ENCODE measurements at regions of chr6 and their contacts with region 1.

Region 1: DNA sequence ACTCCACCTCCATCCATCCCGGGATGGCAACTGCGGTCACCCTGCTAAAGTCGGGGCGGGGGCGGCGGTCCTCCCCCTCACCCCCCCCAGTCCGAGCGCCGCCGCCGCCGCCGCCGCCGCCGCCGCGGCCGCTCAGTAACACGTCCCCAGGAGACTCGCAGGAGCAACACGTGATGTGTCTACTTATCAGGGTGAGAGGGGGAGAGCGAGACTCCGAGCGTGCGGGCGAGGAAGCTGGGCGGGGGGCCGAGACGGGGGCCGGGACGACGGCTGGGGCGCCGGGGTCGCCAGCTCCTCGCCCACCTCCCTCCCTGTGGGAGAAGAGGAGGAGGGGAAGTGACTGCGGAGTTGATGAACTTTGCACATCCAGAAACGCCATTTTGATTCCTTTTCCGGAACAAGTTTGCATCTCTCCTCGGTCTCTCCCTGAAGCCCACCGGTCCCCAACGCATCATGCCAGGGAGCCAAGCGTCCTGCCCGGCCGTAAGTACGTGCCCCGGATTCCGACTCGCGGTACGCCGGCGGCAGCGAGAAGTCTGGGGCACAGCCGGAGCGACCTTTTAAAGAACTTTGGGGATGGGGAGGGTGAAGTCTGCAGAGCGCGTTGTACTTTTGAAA is at the start of gene RREB1:
- DNase-seq: peak in 1 of 2 experiments; percentile 40
- H3K4me3 ChIP-seq: peak within 1 kb of the TSS; percentile 90
- H3K27ac ChIP-seq: peak within 1 kb of the TSS; percentile 69
- H3K4me1 ChIP-seq: peaks cover 29% of the 10 kb centered on the region
- H3K27me3 ChIP-seq: no peaks in the 10 kb centered on the region
- CTCF ChIP-seq: no peak
- total RNA-seq, gene RREB1: 29.2 and 38.4 TPM in 2 replicates

Region 2: GRCh38 chr6:6724539-6725467 is 382.9 kb before region 1 on chr6:
- CTCF ChIA-PET with region 1: no interaction called
- POLR2A ChIA-PET with region 1: no interaction called
- intact Hi-C with region 1: loop called (anchors 5 kb)
- DNase-seq: peak in 1 of 2 experiments; percentile 70
- H3K4me3 ChIP-seq: no peak overlapping the region
- H3K27ac ChIP-seq: no peak overlapping the region
- H3K4me1 ChIP-seq: peaks cover 14% of the 10 kb centered on the region
- H3K27me3 ChIP-seq: no peaks in the 10 kb centered on the region
- CTCF ChIP-seq: peak; percentile 64

Region 3: GRCh38 chr6:6969761-6970223 is 137.9 kb before region 1 on chr6:
- CTCF ChIA-PET with region 1: no interaction called
- POLR2A ChIA-PET with region 1: no interaction called
- intact Hi-C with region 1: loop called (anchors 2 kb)
- DNase-seq: peak; percentile 91 to 97
- H3K4me3 ChIP-seq: no peak overlapping the region
- H3K27ac ChIP-seq: peak overlapping the region; percentile 73
- H3K4me1 ChIP-seq: peaks cover 44% of the 10 kb centered on the region
- H3K27me3 ChIP-seq: no peaks in the 10 kb centered on the region
- CTCF ChIP-seq: no peak

Region 4: DNA sequence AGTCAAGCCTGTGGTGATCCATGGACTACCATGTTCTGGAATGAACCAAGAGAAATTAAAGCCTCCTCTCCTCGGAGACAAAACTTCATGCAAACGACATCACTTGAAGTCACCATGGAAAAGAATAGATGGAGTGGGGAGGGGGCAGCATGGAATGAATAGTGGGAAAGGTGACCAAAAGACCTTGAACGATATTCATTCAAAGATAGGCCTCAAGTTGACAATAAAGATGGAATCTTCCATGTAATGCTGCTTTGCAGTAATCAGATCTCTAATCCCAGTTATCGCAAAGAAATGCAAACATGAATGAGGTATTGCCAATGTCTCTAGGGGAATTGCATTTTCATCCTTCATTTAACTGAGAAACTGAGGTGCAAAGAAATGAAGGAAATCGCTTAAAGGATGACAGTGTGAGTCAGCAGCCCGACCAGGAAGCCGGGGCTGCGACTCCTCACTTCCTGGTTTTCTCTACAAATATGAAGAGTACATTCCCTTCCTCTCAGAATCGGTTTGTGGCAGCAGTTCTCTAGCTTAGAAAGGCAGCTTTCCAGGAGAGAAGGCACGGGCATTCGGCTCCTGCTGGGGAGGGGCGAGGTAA is 65.5 kb before region 1 on chr6:
- CTCF ChIA-PET with region 1: no interaction called
- POLR2A ChIA-PET with region 1: no interaction called
- intact Hi-C with region 1: no loop called
- DNase-seq: peak; percentile 33 to 42
- H3K4me3 ChIP-seq: no peak overlapping the region
- H3K27ac ChIP-seq: peak overlapping the region; percentile 21; the same call in 1 of the 2 replicates
- H3K4me1 ChIP-seq: peaks cover 18% of the 10 kb centered on the region
- H3K27me3 ChIP-seq: no peaks in the 10 kb centered on the region
- CTCF ChIP-seq: no peak

Region 5: GRCh38 chr6:7060756-7061516 is 46.8 kb before region 1 on chr6:
- CTCF ChIA-PET with region 1: no interaction called
- POLR2A ChIA-PET with region 1: no interaction called
- intact Hi-C with region 1: no loop called
- DNase-seq: peak in 1 of 2 experiments; percentile 87
- H3K4me3 ChIP-seq: peak overlapping the region; percentile 20; the same call in 1 of the 2 replicates
- H3K27ac ChIP-seq: peak overlapping the region; percentile 91
- H3K4me1 ChIP-seq: peaks cover 48% of the 10 kb centered on the region
- H3K27me3 ChIP-seq: no peaks in the 10 kb centered on the region
- CTCF ChIP-seq: no peak

Region 6: DNA sequence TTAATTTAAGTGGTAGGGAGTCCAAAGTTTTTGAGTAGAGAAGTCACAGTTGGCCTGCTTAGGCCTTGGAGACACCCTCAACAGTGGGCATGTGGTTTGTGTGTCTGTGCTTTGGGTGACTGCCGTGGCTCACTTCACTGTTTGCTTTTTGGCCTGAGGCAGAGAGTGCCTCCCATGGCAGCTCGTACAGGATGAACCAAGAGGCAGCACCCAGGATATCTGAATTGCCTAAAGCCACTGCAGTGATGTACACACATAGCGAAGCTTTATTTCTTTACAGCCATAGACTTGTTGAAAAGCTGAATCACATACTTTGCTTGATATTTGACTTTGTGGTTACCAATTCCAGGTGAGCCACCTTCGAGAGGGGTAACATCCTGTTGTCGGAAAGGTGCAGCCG is 21.7 kb after region 1 on chr6:
- CTCF ChIA-PET with region 1: no interaction called
- POLR2A ChIA-PET with region 1: no interaction called
- intact Hi-C with region 1: no loop called
- DNase-seq: no peak
- H3K4me3 ChIP-seq: no peak overlapping the region
- H3K27ac ChIP-seq: no peak overlapping the region
- H3K4me1 ChIP-seq: no peaks in the 10 kb centered on the region
- H3K27me3 ChIP-seq: no peaks in the 10 kb centered on the region
- CTCF ChIP-seq: no peak

Region 7: DNA sequence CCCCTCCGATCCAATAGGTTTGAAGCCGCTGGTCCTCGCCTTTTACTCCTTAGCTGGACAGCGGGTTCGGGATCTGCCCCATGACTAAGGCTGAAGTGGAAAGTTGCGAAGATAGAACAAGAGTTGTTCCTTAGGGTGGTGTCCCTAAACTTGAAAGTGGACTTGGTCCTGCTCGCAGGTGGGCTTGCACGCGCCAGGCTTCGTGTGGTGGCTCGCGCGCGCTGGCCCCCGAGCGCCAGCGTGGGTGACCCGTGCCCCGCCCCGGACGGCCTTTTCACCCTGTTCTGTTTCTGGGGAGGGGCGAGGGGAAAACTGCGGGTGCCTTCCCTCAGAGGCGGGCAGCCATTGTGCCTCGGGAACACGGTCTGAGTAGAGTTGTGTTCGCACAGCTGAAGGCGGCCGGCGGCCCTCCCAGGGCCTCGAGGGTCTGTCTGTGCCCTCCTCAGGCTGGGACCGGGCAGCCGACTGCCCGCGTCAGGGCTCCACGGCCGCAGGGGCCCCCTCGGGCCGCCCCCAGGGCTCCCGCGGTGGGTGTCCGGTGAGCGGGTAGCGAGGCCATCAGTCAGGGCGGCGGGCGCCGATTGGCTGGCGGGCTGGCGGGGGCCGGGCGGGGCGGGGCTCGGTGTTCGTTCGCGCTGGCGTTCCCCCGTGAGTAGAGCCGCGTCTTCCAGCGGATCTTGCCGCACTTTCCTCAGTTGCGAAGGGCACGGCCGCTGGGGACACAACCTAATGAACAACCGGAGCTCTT is 33.1 kb after region 1 on chr6:
- CTCF ChIA-PET with region 1: interaction called, 5 read pairs
- POLR2A ChIA-PET with region 1: interaction called, 3 read pairs
- intact Hi-C with region 1: loop called (anchors 2 kb)
- DNase-seq: peak; percentile 51 to 89
- H3K4me3 ChIP-seq: peak overlapping the region; percentile 56
- H3K27ac ChIP-seq: peak overlapping the region; percentile 68
- H3K4me1 ChIP-seq: peaks cover 63% of the 10 kb centered on the region
- H3K27me3 ChIP-seq: no peaks in the 10 kb centered on the region
- CTCF ChIP-seq: no peak

Region 8: GRCh38 chr6:7154341-7155139 is 46.9 kb after region 1 on chr6:
- CTCF ChIA-PET with region 1: interaction called, 19 read pairs
- POLR2A ChIA-PET with region 1: no interaction called
- intact Hi-C with region 1: no loop called
- DNase-seq: no peak
- H3K4me3 ChIP-seq: no peak overlapping the region
- H3K27ac ChIP-seq: no peak overlapping the region
- H3K4me1 ChIP-seq: peaks cover 36% of the 10 kb centered on the region
- H3K27me3 ChIP-seq: no peaks in the 10 kb centered on the region
- CTCF ChIP-seq: no peak

Region 9: GRCh38 chr6:7219310-7219709 is 111.6 kb after region 1 on chr6:
- CTCF ChIA-PET with region 1: no interaction called
- POLR2A ChIA-PET with region 1: no interaction called
- intact Hi-C with region 1: loop called (anchors 5 kb)
- DNase-seq: peak; percentile 21 to 44
- H3K4me3 ChIP-seq: no peak overlapping the region
- H3K27ac ChIP-seq: no peak overlapping the region
- H3K4me1 ChIP-seq: 0 out of 2 replicates have a peak, but pooled peaks cover 7% of the 10 kb centered on the region
- H3K27me3 ChIP-seq: no peaks in the 10 kb centered on the region
- CTCF ChIP-seq: no peak

Measured in PC-9 (cell line).